Heart right ventricle (tissue), 16 donors: ENCODE measurements at regions of chr2 and their contacts with region 1.

Region 1: GRCh38 chr2:3423492-3424175 is 44.1 kb downstream of the TRAPPC12 start:
- DNase-seq: peak; percentile 57 to 79
- ATAC-seq: peak in 7 of 8 donors; percentile 49 to 67 (median 58)
- H3K4me3 ChIP-seq: no peak overlapping the region
- H3K27ac ChIP-seq: no peak overlapping the region
- H3K4me1 ChIP-seq: peaks cover 0 to 13% (median 0%) of the 10 kb centered on the region in 9 donors
- H3K27me3 ChIP-seq: no peaks in the 10 kb centered on the region
- CTCF ChIP-seq: peak; percentile 88 to 99 (median 98)

Region 2: DNA sequence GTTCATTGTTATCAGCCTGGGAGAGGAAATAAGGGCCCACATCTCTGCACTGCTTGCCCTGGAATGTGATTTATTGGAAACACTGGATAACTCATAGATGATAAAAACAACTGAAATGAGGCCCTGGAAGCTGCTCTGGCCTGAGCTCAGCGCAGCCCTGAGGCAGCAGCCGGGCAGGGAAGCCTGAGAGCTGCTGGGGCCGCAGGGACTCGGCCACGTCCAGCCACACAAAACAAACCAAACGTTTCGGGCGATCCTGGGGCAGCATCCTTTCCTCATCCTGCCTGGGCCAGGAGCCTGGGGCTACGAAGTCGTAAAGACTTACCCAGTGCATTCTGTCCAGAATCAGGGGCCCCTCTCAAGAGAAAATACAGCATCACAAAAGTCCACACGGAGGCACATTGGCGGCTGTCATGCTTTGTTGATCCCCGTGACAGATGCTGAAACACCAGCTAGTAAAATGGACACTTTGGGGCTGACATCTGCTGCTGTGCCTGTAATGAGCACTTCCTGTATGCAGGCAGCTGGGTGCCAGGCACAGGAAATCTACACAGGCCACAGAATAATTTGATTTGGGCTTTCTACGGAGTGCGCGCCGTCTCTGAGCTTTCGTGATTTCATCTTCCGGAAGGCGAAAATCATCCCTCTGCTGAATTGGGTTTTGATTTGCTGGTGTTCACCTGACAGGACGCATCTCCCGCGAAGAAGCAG is 296.6 kb before region 1 on chr2:
- intact Hi-C with region 1: no loop called
- DNase-seq: no peak
- ATAC-seq: peak in 5 of 8 donors; percentile 33 to 70 (median 61)
- H3K4me3 ChIP-seq: peak overlapping the region in 4 of 10 donors; percentile 9 to 27 (median 14)
- H3K27ac ChIP-seq: peak overlapping the region in 6 of 10 donors; percentile 8 to 77 (median 34)
- H3K4me1 ChIP-seq: peaks cover 0 to 16% (median 0%) of the 10 kb centered on the region in 9 donors
- H3K27me3 ChIP-seq: peaks cover 0 to 21% (median under 1%) of the 10 kb centered on the region in 7 donors
- CTCF ChIP-seq: no peak

Region 3: DNA sequence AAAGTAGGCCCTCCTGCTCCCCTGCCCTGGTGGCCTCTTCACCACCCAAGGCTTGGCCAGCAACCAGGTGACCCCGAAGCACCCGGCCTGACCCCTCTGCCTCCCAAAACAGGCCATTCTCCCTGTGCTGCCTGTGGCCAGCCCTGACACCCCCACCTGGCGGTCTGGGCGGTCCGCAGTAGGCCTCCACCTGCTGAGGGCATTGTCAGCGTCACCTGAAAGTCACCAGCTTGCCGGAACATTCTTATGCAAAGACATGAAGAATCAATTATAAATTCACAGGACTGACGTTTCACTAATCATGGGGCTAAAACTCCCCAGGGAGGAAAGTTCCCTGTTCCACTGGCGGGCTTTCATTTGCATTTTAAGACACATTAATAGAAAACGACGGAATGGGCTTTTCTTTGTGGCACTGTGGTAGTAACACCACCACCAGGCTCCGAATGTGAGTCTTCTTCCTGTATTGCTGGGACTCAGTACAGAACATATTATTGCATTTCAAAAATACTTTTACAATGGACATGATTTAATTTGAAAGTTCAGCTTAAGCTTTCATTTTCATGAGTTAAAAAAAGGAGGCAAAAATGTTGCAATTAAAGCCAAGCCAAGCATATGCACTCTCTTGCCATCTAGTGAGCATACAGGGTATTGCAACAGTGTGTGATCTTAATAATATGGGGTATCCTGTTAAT is 38.3 kb after region 1 on chr2:
- intact Hi-C with region 1: loop called in 7 of 10 experiments (anchors 1 to 5 kb)
- DNase-seq: peak in 1 of 2 donors; percentile 50
- ATAC-seq: no peak
- H3K4me3 ChIP-seq: no peak overlapping the region
- H3K27ac ChIP-seq: peak overlapping the region in 8 of 10 donors; percentile 8 to 84 (median 44)
- H3K4me1 ChIP-seq: peaks cover 14 to 63% (median 47%) of the 10 kb centered on the region in 9 donors
- H3K27me3 ChIP-seq: no peaks in the 10 kb centered on the region
- CTCF ChIP-seq: peak; percentile 88 to 96 (median 94)